CD8-positive, alpha-beta T cell (primary cell): ENCODE measurements at regions of chr12 and their contacts with region 1.

Region 1: GRCh38 chr12:51419425-51420208 is 5.0 kb upstream of the SLC4A8 start:
- DNase-seq: no peak
- ATAC-seq: no peak
- H3K4me3 ChIP-seq: no peak overlapping the region
- H3K4me3 Mint-ChIP-seq: no peak overlapping the region
- H3K27ac ChIP-seq: no peak overlapping the region
- H3K27ac Mint-ChIP-seq: no peak overlapping the region
- H3K4me1 ChIP-seq: peaks cover 5% of the 10 kb centered on the region
- H3K4me1 Mint-ChIP-seq: peaks cover 13% of the 10 kb centered on the region
- H3K27me3 ChIP-seq: no peaks in the 10 kb centered on the region
- H3K27me3 Mint-ChIP-seq: no peaks in the 10 kb centered on the region
- CTCF ChIP-seq: no peak

Region 2: GRCh38 chr12:52091869-52092268 is 672.3 kb after region 1 on chr12:
- CTCF ChIA-PET with region 1: no interaction called
- POLR2A ChIA-PET with region 1: no interaction called
- intact Hi-C with region 1: loop called in 1 of 2 experiments (anchors 10 kb)
- DNase-seq: no peak
- ATAC-seq: no peak
- H3K4me3 ChIP-seq: no peak overlapping the region
- H3K4me3 Mint-ChIP-seq: no peak overlapping the region
- H3K27ac ChIP-seq: no peak overlapping the region
- H3K27ac Mint-ChIP-seq: no peak overlapping the region
- H3K4me1 ChIP-seq: no peaks in the 10 kb centered on the region
- H3K4me1 Mint-ChIP-seq: no peaks in the 10 kb centered on the region
- H3K27me3 ChIP-seq: peaks cover 0 to 5% of the 10 kb centered on the region in 2 experiments
- H3K27me3 Mint-ChIP-seq: peaks cover 47% of the 10 kb centered on the region
- CTCF ChIP-seq: no peak